Activated CD4-positive, alpha-beta memory T cell treated with anti-CD3 and anti-CD28 coated beads for 36 hours (primary cell): ENCODE measurements at regions of chr5 and their contacts with region 1.

Region 1: GRCh38 chr5:76771705-76772405 is 47.0 kb upstream of the F2RL1 start:
- DNase-seq: no peak
- H3K4me3 Mint-ChIP-seq: no peak overlapping the region
- H3K27ac Mint-ChIP-seq: no peak overlapping the region
- H3K4me1 Mint-ChIP-seq: peaks cover 4% of the 10 kb centered on the region
- H3K27me3 Mint-ChIP-seq: no peaks in the 10 kb centered on the region

Region 2: GRCh38 chr5:76544268-76544926 is 227.5 kb before region 1 on chr5:
- CTCF ChIA-PET with region 1: interaction called, 7 read pairs
- POLR2A ChIA-PET with region 1: no interaction called
- intact Hi-C with region 1: loop called (anchors 2 kb)
- DNase-seq: peak; percentile 79
- H3K4me3 Mint-ChIP-seq: peak overlapping the region; percentile 74
- H3K27ac Mint-ChIP-seq: peak overlapping the region; percentile 99
- H3K4me1 Mint-ChIP-seq: peaks cover 92% of the 10 kb centered on the region
- H3K27me3 Mint-ChIP-seq: no peaks in the 10 kb centered on the region

Region 3: DNA sequence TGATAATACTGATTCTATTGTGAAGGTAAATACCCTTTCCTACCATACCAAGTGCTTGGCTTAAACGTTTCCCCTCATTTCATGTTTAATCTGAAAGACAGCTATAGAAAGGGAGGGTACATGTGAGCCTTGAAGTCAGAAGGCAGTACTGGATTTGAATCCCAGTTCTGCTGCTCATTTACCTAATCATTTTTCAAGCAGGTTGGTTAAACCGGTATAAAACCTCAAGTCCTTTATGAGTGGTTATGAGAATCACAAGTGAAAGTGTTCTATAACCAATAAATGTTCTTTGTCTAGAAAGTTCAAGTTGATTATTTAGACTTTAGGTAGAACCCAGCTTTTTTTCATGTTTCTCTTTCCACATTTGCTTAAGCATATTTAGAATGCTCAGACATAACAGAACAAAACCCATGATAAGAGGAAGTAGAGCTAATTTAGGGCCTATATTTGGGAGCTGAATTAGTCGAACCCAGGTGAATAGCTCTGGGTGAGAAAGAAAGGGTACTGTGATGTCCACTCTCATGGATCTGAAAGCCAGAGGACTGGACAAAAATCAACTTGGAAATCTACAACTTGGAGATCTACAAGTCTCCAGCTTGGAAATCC is 118.9 kb before region 1 on chr5:
- CTCF ChIA-PET with region 1: interaction called, 11 read pairs
- POLR2A ChIA-PET with region 1: no interaction called
- intact Hi-C with region 1: loop called (anchors 10 kb)
- DNase-seq: no peak
- H3K4me3 Mint-ChIP-seq: no peak overlapping the region
- H3K27ac Mint-ChIP-seq: no peak overlapping the region
- H3K4me1 Mint-ChIP-seq: peaks cover 5% of the 10 kb centered on the region
- H3K27me3 Mint-ChIP-seq: no peaks in the 10 kb centered on the region

Region 4: GRCh38 chr5:76691467-76692138 is 80.3 kb before region 1 on chr5:
- CTCF ChIA-PET with region 1: interaction called, 31 read pairs
- POLR2A ChIA-PET with region 1: no interaction called
- intact Hi-C with region 1: no loop called
- DNase-seq: no peak
- H3K4me3 Mint-ChIP-seq: no peak overlapping the region
- H3K27ac Mint-ChIP-seq: peak overlapping the region; percentile 62
- H3K4me1 Mint-ChIP-seq: peaks cover 23% of the 10 kb centered on the region
- H3K27me3 Mint-ChIP-seq: no peaks in the 10 kb centered on the region

Region 5: DNA sequence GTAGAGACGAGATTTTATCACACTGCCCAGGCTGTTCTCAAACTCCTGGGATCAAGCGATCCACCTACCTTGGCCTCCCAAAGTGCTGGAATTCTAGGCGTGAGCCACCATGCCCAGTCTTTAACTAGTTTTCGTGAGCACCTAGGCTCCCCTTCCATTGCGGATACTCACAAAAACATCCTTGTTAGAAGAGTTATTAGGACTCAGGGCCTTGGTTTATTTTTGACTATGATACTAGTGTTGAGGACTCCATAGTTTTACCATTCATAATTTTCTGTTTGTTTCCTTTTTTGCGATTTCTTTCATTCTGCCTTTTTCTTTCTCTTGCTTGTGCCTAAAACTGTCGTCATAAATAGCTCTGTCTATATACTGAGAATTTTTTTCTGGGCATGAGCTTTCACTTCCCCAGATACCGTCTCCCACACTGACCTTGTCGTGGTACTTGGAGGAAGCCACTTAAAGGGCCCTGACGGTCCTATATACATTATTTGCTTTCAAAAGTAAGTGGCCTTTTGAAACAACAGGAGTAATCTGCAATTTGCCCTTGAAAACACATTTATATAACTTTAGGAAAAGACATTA is 50.8 kb before region 1 on chr5:
- CTCF ChIA-PET with region 1: interaction called, 61 read pairs
- POLR2A ChIA-PET with region 1: no interaction called
- intact Hi-C with region 1: loop called (anchors 1 kb)
- DNase-seq: no peak
- H3K4me3 Mint-ChIP-seq: no peak overlapping the region
- H3K27ac Mint-ChIP-seq: no peak overlapping the region
- H3K4me1 Mint-ChIP-seq: peaks cover 15% of the 10 kb centered on the region
- H3K27me3 Mint-ChIP-seq: peaks cover 14% of the 10 kb centered on the region

Region 6: DNA sequence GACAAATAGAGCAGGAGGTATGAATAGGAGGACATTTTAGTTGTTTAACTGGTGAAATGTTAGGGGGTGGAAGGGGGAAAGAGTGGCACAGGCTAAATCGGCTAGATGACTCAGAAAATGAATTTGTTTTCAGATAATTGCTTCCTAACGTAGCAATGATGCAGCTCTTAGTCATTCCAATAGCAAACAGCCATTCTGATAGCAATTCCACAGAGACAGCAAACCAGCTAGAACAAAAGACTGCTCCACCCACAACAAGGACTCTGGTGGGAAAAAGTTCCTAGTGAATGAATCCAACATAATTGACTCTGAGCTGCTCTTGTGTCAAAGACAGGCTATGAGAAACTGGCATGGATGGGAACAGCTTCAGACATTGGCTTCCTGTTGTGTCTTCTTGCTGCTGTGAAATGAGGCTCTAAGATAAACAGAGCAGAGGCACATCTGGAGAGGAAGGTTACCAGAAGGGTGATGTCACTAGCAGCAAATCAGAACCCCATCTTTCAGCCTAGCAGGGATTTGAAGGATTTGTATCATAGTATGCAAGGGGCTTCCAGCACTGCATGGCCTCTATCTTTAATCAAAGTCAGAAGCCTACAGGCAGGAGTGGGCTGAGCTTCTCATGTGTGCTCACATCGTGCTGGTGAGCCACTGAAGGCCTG is 18.9 kb after region 1 on chr5:
- CTCF ChIA-PET with region 1: interaction called, 10 read pairs
- POLR2A ChIA-PET with region 1: no interaction called
- intact Hi-C with region 1: no loop called
- DNase-seq: peak; percentile 24
- H3K4me3 Mint-ChIP-seq: no peak overlapping the region
- H3K27ac Mint-ChIP-seq: peak overlapping the region; percentile 67
- H3K4me1 Mint-ChIP-seq: peaks cover 20% of the 10 kb centered on the region
- H3K27me3 Mint-ChIP-seq: no peaks in the 10 kb centered on the region

Region 7: GRCh38 chr5:77143998-77144836 is 372.4 kb after region 1 on chr5:
- CTCF ChIA-PET with region 1: no interaction called
- POLR2A ChIA-PET with region 1: no interaction called
- intact Hi-C with region 1: no loop called
- DNase-seq: peak; percentile 75
- H3K4me3 Mint-ChIP-seq: no peak overlapping the region
- H3K27ac Mint-ChIP-seq: no peak overlapping the region
- H3K4me1 Mint-ChIP-seq: peaks cover 24% of the 10 kb centered on the region
- H3K27me3 Mint-ChIP-seq: peaks cover 5% of the 10 kb centered on the region